Adrenal gland (tissue), 19 donors: ENCODE measurements at regions of chr16 and their contacts with region 1.

Region 1: GRCh38 chr16:28317040-28317880 is 24.9 kb downstream of the SBK1 start:
- DNase-seq: peak; percentile 51 to 74 (median 69)
- H3K4me3 ChIP-seq: no peak overlapping the region
- H3K27ac ChIP-seq: no peak overlapping the region
- H3K4me1 ChIP-seq: no peaks in the 10 kb centered on the region
- H3K27me3 ChIP-seq: no peaks in the 10 kb centered on the region
- CTCF ChIP-seq: peak; percentile 75 to 86 (median 83)
- POLR2A ChIP-seq: no peak

Region 2: DNA sequence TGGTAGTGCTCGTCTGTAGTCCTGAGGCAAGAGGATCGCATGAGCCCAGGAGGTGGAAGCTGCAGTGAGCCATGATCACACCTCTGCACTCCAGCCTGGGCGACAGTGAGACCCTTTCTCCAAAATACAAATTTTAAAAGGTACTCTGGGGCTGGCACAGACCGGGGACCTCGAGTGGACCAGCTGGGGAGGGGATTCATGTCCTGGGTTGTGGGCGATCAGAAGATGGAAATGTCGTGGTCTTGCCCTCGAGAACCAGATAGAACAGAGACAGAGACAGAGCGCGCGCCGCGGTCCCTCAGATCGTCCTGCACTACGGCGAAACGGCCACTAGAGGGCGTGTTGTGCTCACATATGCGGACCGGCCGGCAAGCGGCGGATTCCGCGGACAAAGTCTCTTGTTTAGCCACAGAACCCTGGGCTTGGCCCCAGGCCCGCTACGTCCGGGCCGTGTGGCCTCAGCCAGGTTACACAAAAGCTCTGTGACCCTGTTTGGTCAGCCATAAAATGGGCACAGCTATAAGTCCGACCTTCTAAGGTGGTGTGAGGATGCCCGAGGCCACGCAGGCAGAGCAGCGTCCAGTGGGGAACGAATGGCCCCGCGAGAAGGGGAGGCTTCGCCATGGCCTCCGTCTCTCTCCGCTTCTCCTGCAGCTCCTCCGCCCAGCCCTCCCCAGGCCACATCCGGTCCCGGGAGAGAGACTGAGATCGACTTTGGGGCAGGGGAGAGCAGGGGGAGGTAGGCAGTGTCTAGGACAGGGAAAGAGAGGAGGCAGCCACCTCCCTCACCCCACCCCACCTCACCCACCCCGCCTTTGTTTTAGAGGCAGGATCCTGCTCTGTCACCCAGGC is 39.5 kb before region 1 on chr16:
- intact Hi-C with region 1: loop called (anchors 2 to 5 kb)
- DNase-seq: peak; percentile 83 to 96 (median 90)
- H3K4me3 ChIP-seq: peak overlapping the region in 1 of 4 donors; percentile 59
- H3K27ac ChIP-seq: no peak overlapping the region
- H3K4me1 ChIP-seq: peaks cover 0 to 5% of the 10 kb centered on the region in 2 donors
- H3K27me3 ChIP-seq: no peaks in the 10 kb centered on the region
- CTCF ChIP-seq: peak; percentile 94 to 99 (median 97)
- POLR2A ChIP-seq: no peak

Region 3: DNA sequence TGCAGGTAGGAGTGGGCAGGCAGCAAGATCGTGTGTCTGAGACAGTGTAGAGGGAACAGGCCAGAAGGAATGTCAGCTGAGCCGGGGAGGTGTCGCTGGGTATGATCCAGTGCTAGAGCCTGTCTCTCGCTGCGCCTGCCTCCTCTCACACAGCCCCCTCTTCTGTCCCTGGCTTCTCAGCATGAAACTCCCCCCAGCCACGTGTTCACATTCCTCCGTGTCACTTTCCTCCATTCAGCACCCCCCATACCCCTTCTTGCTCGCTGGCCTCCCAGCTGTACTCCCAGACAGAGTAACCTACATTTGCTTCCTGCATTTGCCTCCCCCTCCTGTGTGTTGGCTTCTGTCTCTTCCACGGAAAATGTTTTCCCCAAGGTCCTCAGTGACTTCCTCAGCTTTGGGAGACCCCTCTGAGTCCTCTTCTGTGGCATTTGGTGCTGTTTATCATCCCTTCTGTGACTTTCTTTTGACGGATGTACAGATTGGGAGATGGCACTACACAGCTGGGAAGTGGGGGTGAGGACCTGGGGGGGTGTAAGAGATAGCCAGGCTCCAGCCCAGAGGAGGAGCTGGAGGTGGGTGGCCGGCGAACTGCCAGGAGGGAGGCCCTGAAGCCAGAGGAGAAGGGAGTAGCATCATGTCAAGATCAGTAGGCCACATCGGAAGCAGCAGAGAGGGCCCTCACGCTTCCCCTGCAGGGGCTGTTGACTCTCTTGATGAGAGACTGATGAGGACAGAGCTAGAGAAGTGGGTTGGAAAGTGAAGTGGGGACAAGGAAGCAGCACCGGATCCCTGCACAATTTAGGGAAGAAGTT is 255.6 kb after region 1 on chr16:
- intact Hi-C with region 1: no loop called
- DNase-seq: peak in 1 of 7 donors; percentile 30
- H3K4me3 ChIP-seq: no peak overlapping the region
- H3K27ac ChIP-seq: peak overlapping the region in 2 of 5 donors; percentile 26 to 58
- H3K4me1 ChIP-seq: peaks cover 0 to 6% of the 10 kb centered on the region in 2 donors
- H3K27me3 ChIP-seq: no peaks in the 10 kb centered on the region
- CTCF ChIP-seq: no peak
- POLR2A ChIP-seq: no peak